Caco-2 (cell line): ENCODE measurements at regions of chr6 and their contacts with region 1.

Region 1: GRCh38 chr6:2999618-3000557 is at the start of gene NQO2:
- DNase-seq: peak; percentile 91 to 95
- H3K4me3 ChIP-seq: peak within 1 kb of the TSS; percentile 62
- H3K4me3 Mint-ChIP-seq: peak within 1 kb of the TSS; percentile 83
- H3K27ac Mint-ChIP-seq: peak within 1 kb of the TSS; percentile 72
- H3K4me1 ChIP-seq: no peaks in the 10 kb centered on the region
- H3K4me1 Mint-ChIP-seq: peaks cover 7% of the 10 kb centered on the region
- H3K27me3 ChIP-seq: no peaks in the 10 kb centered on the region
- H3K27me3 Mint-ChIP-seq: no peaks in the 10 kb centered on the region
- CTCF ChIP-seq: peak in 1 of 2 experiments; percentile 0
- total RNA-seq, gene NQO2: 35.8 and 37.2 TPM in 2 replicates

Region 2: GRCh38 chr6:2765166-2765895 is 234.6 kb before region 1 on chr6 and contains the start of gene WRNIP1:
- CTCF ChIA-PET with region 1: no interaction called
- POLR2A ChIA-PET with region 1: interaction called, 13 read pairs
- intact Hi-C with region 1: no loop called
- DNase-seq: peak; percentile 97 to 98
- H3K4me3 ChIP-seq: peak within 1 kb of the TSS; percentile 90
- H3K4me3 Mint-ChIP-seq: peak within 1 kb of the TSS; percentile 72
- H3K27ac Mint-ChIP-seq: peak within 1 kb of the TSS; percentile 94
- H3K4me1 ChIP-seq: no peaks in the 10 kb centered on the region; the same call in 1 of the 2 replicates
- H3K4me1 Mint-ChIP-seq: peaks cover 18% of the 10 kb centered on the region
- H3K27me3 ChIP-seq: no peaks in the 10 kb centered on the region
- H3K27me3 Mint-ChIP-seq: no peaks in the 10 kb centered on the region
- CTCF ChIP-seq: peak; percentile 32 to 59
- total RNA-seq, gene WRNIP1: 46.5 and 51.7 TPM in 2 replicates

Region 3: GRCh38 chr6:2891768-2892170 is 108.1 kb before region 1 on chr6:
- CTCF ChIA-PET with region 1: no interaction called
- POLR2A ChIA-PET with region 1: interaction called, 15 read pairs
- intact Hi-C with region 1: no loop called
- DNase-seq: peak; percentile 92 to 93
- H3K4me3 ChIP-seq: peak overlapping the region; percentile 71
- H3K4me3 Mint-ChIP-seq: peak overlapping the region; percentile 92
- H3K27ac Mint-ChIP-seq: peak overlapping the region; percentile 80
- H3K4me1 ChIP-seq: peaks cover 8% of the 10 kb centered on the region; the same call in 1 of the 2 replicates
- H3K4me1 Mint-ChIP-seq: peaks cover 10% of the 10 kb centered on the region
- H3K27me3 ChIP-seq: no peaks in the 10 kb centered on the region
- H3K27me3 Mint-ChIP-seq: no peaks in the 10 kb centered on the region
- CTCF ChIP-seq: no peak

Region 4: DNA sequence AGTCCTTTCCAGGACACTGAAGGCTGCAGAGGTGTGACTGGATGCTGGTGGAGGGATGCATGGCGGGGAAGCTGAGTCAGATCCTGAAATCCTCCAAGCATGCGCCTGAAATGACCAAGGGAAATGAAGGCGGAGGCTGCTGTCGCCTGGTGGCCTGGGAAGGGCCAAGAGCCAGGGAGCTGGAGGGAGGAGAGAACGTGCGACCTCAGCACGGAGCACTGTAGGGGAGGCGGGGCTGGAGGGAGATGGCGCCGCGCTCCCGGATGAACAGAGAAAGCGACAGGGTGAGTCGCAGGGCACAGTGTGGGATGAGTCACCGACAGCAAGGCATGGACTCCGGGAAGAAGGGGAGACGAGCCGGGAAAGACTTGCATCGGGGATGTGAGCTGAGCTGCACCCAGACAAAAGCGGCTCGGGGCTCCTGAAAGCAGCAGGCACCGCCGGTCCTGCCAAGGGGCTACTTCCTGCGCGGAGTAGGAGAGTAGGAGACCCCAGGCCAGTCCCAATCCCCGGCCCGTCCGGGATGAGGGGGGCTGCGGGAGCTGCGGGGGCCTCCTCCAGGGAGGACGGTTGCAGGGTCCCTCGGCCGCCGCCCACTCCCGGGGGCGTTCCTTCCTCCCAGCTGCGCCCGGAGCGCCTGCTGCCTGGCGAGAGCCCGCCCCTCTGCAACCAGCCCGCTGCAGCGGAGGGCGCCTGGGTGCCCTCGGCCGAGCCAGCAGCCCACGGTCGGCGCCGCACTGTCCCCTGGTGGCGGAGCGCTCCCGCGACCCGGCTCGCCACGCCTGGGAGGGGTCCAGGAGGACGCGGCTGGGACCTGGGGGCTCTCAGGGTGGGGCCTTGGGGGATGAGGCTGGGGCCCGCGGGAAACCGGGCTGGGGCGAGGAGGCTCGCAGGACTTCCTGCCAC is 11.2 kb before region 1 on chr6:
- CTCF ChIA-PET with region 1: interaction called, 9 read pairs
- POLR2A ChIA-PET with region 1: interaction called, 24 read pairs
- intact Hi-C with region 1: no loop called
- DNase-seq: peak; percentile 92 to 94
- H3K4me3 ChIP-seq: peak overlapping the region; percentile 79
- H3K4me3 Mint-ChIP-seq: peak overlapping the region; percentile 76
- H3K27ac Mint-ChIP-seq: peak overlapping the region; percentile 97
- H3K4me1 ChIP-seq: peaks cover 6% of the 10 kb centered on the region; the same call in 1 of the 2 replicates
- H3K4me1 Mint-ChIP-seq: peaks cover 12% of the 10 kb centered on the region
- H3K27me3 ChIP-seq: no peaks in the 10 kb centered on the region
- H3K27me3 Mint-ChIP-seq: no peaks in the 10 kb centered on the region
- CTCF ChIP-seq: peak; percentile 79 to 86

Region 5: DNA sequence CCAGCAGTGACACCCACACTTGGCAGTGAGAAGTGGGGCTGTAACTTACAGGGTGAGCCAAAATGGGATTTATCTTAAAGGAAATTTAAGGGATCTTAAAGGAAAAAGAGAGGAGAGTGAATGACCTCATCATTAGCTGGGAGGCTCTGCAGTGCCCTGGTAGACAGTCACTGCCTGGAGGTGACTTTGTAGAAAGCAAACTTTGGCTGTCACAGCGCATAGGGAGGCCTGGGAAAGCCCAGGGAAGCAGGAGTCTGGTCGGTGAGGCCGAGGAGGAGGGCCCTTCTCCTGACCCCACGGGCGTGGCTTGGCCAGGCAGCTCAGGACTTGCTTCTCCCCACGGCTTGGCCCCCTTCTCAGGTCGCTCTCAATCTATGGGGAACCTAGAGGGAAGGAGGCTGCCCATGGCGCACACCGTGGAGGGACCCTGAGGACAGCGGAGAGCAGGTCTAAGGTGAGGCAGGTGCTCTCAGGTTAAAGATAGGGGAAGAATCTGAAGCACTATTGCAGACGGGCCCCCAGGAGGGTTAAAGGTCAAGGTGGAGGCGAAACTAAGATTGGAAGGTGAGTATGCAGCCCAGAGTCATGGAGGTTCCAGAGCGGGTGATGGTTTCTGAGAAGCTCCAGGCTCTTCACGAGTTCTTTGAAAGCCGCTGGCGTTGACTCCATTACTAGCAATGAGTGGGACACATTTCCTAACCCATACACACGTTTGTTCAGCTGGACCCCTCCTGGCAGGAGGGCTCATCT is 52.8 kb after region 1 on chr6:
- CTCF ChIA-PET with region 1: interaction called, 21 read pairs
- POLR2A ChIA-PET with region 1: interaction called, 13 read pairs
- intact Hi-C with region 1: loop called (anchors 1 kb)
- DNase-seq: peak; percentile 63 to 74
- H3K4me3 ChIP-seq: peak overlapping the region; percentile 82
- H3K4me3 Mint-ChIP-seq: peak overlapping the region; percentile 84
- H3K27ac Mint-ChIP-seq: peak overlapping the region; percentile 89
- H3K4me1 ChIP-seq: peaks cover 13% of the 10 kb centered on the region
- H3K4me1 Mint-ChIP-seq: peaks cover 10% of the 10 kb centered on the region
- H3K27me3 ChIP-seq: no peaks in the 10 kb centered on the region
- H3K27me3 Mint-ChIP-seq: no peaks in the 10 kb centered on the region
- CTCF ChIP-seq: no peak

Region 6: DNA sequence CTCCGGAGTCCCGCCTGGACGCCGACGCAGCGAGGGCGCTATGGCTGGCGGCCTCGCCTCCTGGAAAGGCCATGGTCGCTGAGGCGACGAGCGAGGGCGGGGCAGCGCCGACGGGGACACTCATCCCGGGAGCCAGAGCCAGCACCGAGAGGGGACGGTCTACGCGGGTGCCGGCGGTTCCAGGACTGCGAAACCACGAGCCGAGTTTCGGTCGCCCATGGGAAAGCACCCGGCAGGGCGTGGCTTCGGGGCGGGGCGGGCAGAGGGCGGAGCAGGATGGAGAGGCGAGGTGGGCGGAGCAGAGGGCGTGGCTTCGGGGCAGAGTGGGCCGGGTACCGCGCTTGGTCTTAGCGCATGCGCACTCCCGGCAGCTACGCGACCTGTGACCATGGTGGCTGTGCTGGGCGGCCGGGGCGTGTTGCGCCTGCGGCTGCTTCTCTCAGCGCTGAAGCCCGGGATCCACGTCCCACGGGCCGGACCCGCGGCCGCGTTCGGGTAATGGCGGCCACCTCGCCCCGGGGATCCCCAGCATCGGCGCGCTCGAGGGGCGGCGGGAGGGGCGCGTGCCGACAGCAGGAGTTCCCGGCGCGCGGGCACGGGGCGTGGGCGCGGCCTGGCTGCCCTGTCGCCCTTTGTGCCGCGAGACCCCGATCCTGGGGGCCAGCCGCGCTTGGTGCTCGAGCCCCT is 118.6 kb after region 1 on chr6 and contains the start of gene BPHL:
- CTCF ChIA-PET with region 1: no interaction called
- POLR2A ChIA-PET with region 1: no interaction called
- intact Hi-C with region 1: loop called (anchors 2 kb)
- DNase-seq: peak; percentile 96 to 98
- H3K4me3 ChIP-seq: peak within 1 kb of the TSS; percentile 75
- H3K4me3 Mint-ChIP-seq: peak within 1 kb of the TSS; percentile 91
- H3K27ac Mint-ChIP-seq: peak within 1 kb of the TSS; percentile 93
- H3K4me1 ChIP-seq: peaks cover 16% of the 10 kb centered on the region
- H3K4me1 Mint-ChIP-seq: peaks cover 16% of the 10 kb centered on the region
- H3K27me3 ChIP-seq: no peaks in the 10 kb centered on the region
- H3K27me3 Mint-ChIP-seq: no peaks in the 10 kb centered on the region
- CTCF ChIP-seq: no peak
- total RNA-seq, gene BPHL: 29.5 and 31.5 TPM in 2 replicates

Region 7: DNA sequence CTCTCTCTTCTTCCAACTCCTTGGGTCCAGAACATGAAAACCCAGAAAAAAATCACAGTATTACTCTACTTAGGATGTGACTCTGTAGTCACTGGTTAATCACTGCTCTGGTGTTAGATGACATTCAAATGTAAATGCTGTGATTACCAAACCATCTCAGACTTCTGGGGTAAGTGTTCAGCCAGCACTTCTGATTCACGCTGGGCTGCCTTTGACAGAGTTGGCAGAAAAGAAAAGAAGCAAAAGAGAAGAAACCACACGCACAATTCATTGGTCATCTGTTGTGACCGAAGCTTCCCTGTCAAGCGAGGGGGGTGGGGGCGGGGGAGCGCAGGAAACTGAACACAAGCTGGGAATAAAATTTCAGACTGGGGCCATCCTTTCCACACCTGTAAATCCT is 341.6 kb after region 1 on chr6:
- CTCF ChIA-PET with region 1: no interaction called
- POLR2A ChIA-PET with region 1: interaction called, 10 read pairs
- intact Hi-C with region 1: no loop called
- DNase-seq: no peak
- H3K4me3 ChIP-seq: no peak overlapping the region
- H3K4me3 Mint-ChIP-seq: no peak overlapping the region
- H3K27ac Mint-ChIP-seq: no peak overlapping the region
- H3K4me1 ChIP-seq: peaks cover 19% of the 10 kb centered on the region
- H3K4me1 Mint-ChIP-seq: peaks cover 21% of the 10 kb centered on the region
- H3K27me3 ChIP-seq: no peaks in the 10 kb centered on the region
- H3K27me3 Mint-ChIP-seq: no peaks in the 10 kb centered on the region
- CTCF ChIP-seq: no peak